Mammary epithelial cell (primary cell): ENCODE measurements at regions of chr10 and their contacts with region 1.

Region 1: DNA sequence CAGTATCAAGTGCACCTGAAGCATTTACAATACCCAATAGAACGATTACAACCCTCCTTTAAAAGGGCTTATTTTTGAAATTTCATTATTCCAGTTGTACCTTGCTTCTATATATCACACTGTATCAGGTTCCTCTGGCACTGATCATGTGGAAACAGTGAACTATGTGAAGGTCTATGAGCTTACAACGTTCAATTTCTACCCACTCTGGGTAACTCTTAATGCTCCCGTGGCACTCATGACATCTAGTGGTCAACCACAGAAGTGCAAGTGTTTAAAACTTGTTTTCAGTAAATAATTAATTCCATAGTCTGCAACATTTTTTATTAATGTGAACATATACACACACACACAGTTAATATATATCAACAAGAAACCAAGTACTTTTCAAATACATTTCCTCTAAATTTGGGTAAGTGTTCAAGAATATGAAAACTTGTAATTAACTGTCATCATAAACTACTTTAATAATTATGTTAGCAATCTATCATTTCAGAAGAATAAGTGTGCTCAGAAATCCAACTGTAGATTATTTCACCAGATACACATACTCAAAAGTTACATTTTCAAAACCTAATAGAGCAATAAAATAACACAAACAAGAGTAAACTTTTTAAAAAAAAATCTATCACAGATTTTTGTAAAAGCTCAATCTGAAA is 61.0 kb downstream of the MPP7 start:
- DNase-seq: peak; percentile 43
- H3K4me3 ChIP-seq: no peak overlapping the region
- H3K27ac ChIP-seq: no peak overlapping the region
- H3K4me1 ChIP-seq: peaks cover 9% of the 10 kb centered on the region
- H3K27me3 ChIP-seq: no peaks in the 10 kb centered on the region
- CTCF ChIP-seq: peak; percentile 88 to 89

Region 2: GRCh38 chr10:27369880-27370279 is 872.0 kb before region 1 on chr10:
- CTCF ChIA-PET with region 1: no interaction called
- dilution Hi-C with region 1: no loop called
- in situ Hi-C with region 1: no loop called
- intact Hi-C with region 1: loop called (anchors 5 kb)
- DNase-seq: no peak
- H3K4me3 ChIP-seq: no peak overlapping the region
- H3K27ac ChIP-seq: no peak overlapping the region
- H3K4me1 ChIP-seq: no peaks in the 10 kb centered on the region
- H3K27me3 ChIP-seq: no peaks in the 10 kb centered on the region
- CTCF ChIP-seq: peak; percentile 23 to 36

Region 3: GRCh38 chr10:27661514-27662286 is 580.2 kb before region 1 on chr10:
- CTCF ChIA-PET with region 1: no interaction called
- dilution Hi-C with region 1: no loop called
- in situ Hi-C with region 1: no loop called
- intact Hi-C with region 1: loop called (anchors 2 kb)
- DNase-seq: peak; percentile 4
- H3K4me3 ChIP-seq: no peak overlapping the region
- H3K27ac ChIP-seq: no peak overlapping the region
- H3K4me1 ChIP-seq: no peaks in the 10 kb centered on the region
- H3K27me3 ChIP-seq: no peaks in the 10 kb centered on the region
- CTCF ChIP-seq: no peak

Region 4: GRCh38 chr10:27742195-27743011 is 499.5 kb before region 1 on chr10:
- CTCF ChIA-PET with region 1: no interaction called
- dilution Hi-C with region 1: no loop called
- in situ Hi-C with region 1: no loop called
- intact Hi-C with region 1: loop called (anchors 5 kb)
- DNase-seq: peak; percentile 63
- H3K4me3 ChIP-seq: peak overlapping the region; percentile 41 to 47 (median 43)
- H3K27ac ChIP-seq: no peak overlapping the region
- H3K4me1 ChIP-seq: peaks cover 26% of the 10 kb centered on the region
- H3K27me3 ChIP-seq: peaks cover 48% of the 10 kb centered on the region
- CTCF ChIP-seq: peak; percentile 35 to 60

Region 5: GRCh38 chr10:27783660-27784059 is 458.2 kb before region 1 on chr10:
- CTCF ChIA-PET with region 1: no interaction called
- dilution Hi-C with region 1: no loop called
- in situ Hi-C with region 1: no loop called
- intact Hi-C with region 1: loop called (anchors 1 kb)
- DNase-seq: peak; percentile 55
- H3K4me3 ChIP-seq: no peak overlapping the region
- H3K27ac ChIP-seq: no peak overlapping the region
- H3K4me1 ChIP-seq: no peaks in the 10 kb centered on the region
- H3K27me3 ChIP-seq: peaks cover 3% of the 10 kb centered on the region
- CTCF ChIP-seq: peak; percentile 29 to 52

Region 6: GRCh38 chr10:27865221-27865638 is 376.6 kb before region 1 on chr10:
- CTCF ChIA-PET with region 1: no interaction called
- dilution Hi-C with region 1: no loop called
- in situ Hi-C with region 1: no loop called
- intact Hi-C with region 1: loop called (anchors 10 kb)
- DNase-seq: peak; percentile 89
- H3K4me3 ChIP-seq: no peak overlapping the region
- H3K27ac ChIP-seq: no peak overlapping the region
- H3K4me1 ChIP-seq: peaks cover 13% of the 10 kb centered on the region
- H3K27me3 ChIP-seq: no peaks in the 10 kb centered on the region
- CTCF ChIP-seq: peak in 1 of 2 donors; percentile 31

Region 7: DNA sequence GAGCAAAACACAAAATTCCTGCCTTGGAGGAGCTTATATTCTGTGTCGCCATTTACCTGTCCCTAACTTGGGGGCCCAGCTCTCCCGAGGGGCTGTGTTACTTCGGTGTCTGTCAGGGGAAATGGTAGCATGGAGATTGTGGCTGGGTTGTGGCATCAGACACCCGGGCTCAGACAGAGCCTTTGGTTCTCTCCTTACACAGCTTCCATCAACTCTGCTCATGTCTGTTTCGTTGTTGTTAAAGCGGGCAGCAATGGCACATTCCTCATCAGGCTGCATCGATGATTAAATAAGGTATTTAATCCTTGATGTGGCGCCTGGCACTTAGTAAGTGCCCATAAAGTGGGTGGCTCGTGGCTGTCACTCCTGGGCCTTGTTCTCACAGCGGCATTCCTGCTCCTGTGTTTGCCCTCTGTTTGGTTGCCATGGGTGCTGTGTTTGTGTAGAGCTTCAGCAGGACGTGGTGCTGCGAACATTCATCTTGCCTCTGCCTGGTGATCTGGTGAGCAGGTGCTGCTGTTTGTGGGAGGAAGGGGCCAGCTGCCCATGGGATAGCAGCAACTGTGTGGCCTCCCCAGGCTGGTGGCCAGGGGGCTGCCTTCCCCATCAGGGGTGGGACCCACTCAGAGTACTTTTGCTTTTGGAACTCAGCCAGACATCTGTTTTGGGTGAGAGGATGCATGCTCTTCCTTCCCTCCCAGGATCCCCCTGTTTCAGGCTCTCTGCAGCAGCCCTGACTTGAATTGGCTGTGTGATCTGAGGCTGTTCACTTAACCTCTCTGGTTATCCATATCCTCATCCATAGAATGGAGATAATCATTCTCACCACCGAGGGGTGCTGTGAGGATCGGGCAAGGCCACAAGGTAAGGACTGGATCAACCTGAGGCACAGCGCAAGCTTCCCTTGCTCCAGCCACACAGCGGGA is 1600.1 kb after region 1 on chr10:
- CTCF ChIA-PET with region 1: no interaction called
- dilution Hi-C with region 1: no loop called
- in situ Hi-C with region 1: no loop called
- intact Hi-C with region 1: no loop called
- DNase-seq: no peak
- H3K4me3 ChIP-seq: no peak overlapping the region
- H3K27ac ChIP-seq: no peak overlapping the region
- H3K4me1 ChIP-seq: peaks cover 21% of the 10 kb centered on the region
- H3K27me3 ChIP-seq: no peaks in the 10 kb centered on the region
- CTCF ChIP-seq: no peak